H1 (cell line): ENCODE measurements at regions of chr7 and their contacts with region 1.

Region 1: DNA sequence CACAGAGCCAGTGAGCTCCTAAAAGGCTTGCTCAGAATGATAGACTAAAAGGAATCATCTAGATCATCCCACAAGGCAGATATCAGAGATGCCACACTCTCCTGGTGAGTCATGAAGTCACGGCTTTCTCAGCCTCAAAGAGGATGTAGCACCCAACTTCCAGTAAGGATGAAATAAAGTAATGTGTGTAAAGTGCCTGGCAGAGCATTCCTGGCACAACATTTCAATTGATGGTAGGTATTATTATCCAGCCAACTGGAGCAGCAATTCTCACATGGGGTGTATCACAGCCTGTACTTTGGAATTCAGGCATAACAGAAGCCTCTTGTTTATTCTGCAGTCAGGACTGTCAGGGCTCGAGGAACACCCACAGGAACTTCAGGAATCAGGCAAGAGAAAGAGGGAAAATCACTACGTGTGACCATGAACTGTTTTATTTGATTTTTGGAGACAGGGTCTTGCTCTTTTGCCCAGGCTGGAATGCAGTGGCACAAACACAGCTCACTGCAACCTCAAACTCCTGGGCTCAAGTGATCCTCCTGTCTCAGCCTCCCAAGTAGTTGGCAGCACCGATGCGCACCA is 5.3 kb upstream of the NAT16 start:
- DNase-seq: no peak
- H3K4me3 ChIP-seq: no peak overlapping the region
- H3K27ac ChIP-seq: no peak overlapping the region
- H3K4me1 ChIP-seq: peaks cover 0 to 5% (median 3%) of the 10 kb centered on the region in 4 experiments; a peak in 6 of 7 replicates
- H3K27me3 ChIP-seq: peaks cover 6 to 10% (median 8%) of the 10 kb centered on the region in 4 experiments; a peak in 6 of 7 replicates
- CTCF ChIP-seq: no peak
- EP300 ChIP-seq: no peak
- POLR2A ChIP-seq: no peak
- RAD21 ChIP-seq: no peak

Region 2: GRCh38 chr7:101058355-101058754 is 127.0 kb before region 1 on chr7:
- CTCF ChIA-PET with region 1: no interaction called
- POLR2A ChIA-PET with region 1: no interaction called
- DNase-seq: peak in 1 of 2 experiments; percentile 88
- H3K4me3 ChIP-seq: no peak overlapping the region
- H3K27ac ChIP-seq: no peak overlapping the region
- H3K4me1 ChIP-seq: no peaks in the 10 kb centered on the region
- H3K27me3 ChIP-seq: peaks cover 0 to 2% (median 0%) of the 10 kb centered on the region in 4 experiments; a peak in 1 of 7 replicates
- CTCF ChIP-seq: no peak
- EP300 ChIP-seq: no peak
- POLR2A ChIP-seq: no peak
- RAD21 ChIP-seq: 0 out of 4 replicates have a peak, but pooled peaks of 1 of the 2 experiments have one; percentile 3

Region 3: GRCh38 chr7:101165075-101165957 is 20.0 kb before region 1 on chr7 and contains the start of gene VGF:
- CTCF ChIA-PET with region 1: interaction called, 19 read pairs
- POLR2A ChIA-PET with region 1: interaction called, 4 read pairs
- DNase-seq: peak; percentile 93 to 98
- H3K4me3 ChIP-seq: peak within 1 kb of the TSS; percentile 46 to 74 (median 55)
- H3K27ac ChIP-seq: no peak within 1 kb of the TSS
- H3K4me1 ChIP-seq: peaks cover 21 to 64% (median 43%) of the 10 kb centered on the region in 4 experiments
- H3K27me3 ChIP-seq: peaks cover 17 to 67% (median 48%) of the 10 kb centered on the region in 4 experiments
- CTCF ChIP-seq: no peak
- EP300 ChIP-seq: peak in 1 of 2 experiments; percentile 79; a peak in 1 of 3 replicates
- POLR2A ChIP-seq: no peak
- RAD21 ChIP-seq: no peak
- total RNA-seq, gene VGF: 7.0 and 7.4 TPM in 2 replicates

Region 4: GRCh38 chr7:101173752-101174244 is 11.6 kb before region 1 on chr7:
- CTCF ChIA-PET with region 1: interaction called, 90 read pairs
- POLR2A ChIA-PET with region 1: interaction called, 8 read pairs
- DNase-seq: peak in 1 of 2 experiments; percentile 98
- H3K4me3 ChIP-seq: peak overlapping the region; percentile 31 to 68 (median 51); a peak in 7 of 8 replicates
- H3K27ac ChIP-seq: no peak overlapping the region
- H3K4me1 ChIP-seq: peaks cover 6 to 48% (median 34%) of the 10 kb centered on the region in 4 experiments
- H3K27me3 ChIP-seq: peaks cover 64 to 99% (median 91%) of the 10 kb centered on the region in 4 experiments
- CTCF ChIP-seq: no peak
- EP300 ChIP-seq: no peak
- POLR2A ChIP-seq: no peak
- RAD21 ChIP-seq: no peak

Region 5: GRCh38 chr7:101195884-101196283 is 10.5 kb after region 1 on chr7:
- CTCF ChIA-PET with region 1: interaction called, 41 read pairs
- POLR2A ChIA-PET with region 1: interaction called, 12 read pairs
- DNase-seq: no peak
- H3K4me3 ChIP-seq: no peak overlapping the region
- H3K27ac ChIP-seq: no peak overlapping the region
- H3K4me1 ChIP-seq: peaks cover 0 to 11% (median 7%) of the 10 kb centered on the region in 4 experiments; a peak in 6 of 7 replicates
- H3K27me3 ChIP-seq: peaks cover 0 to 2% (median 0%) of the 10 kb centered on the region in 4 experiments; a peak in 1 of 7 replicates
- CTCF ChIP-seq: no peak
- EP300 ChIP-seq: no peak
- POLR2A ChIP-seq: no peak
- RAD21 ChIP-seq: no peak

Region 6: DNA sequence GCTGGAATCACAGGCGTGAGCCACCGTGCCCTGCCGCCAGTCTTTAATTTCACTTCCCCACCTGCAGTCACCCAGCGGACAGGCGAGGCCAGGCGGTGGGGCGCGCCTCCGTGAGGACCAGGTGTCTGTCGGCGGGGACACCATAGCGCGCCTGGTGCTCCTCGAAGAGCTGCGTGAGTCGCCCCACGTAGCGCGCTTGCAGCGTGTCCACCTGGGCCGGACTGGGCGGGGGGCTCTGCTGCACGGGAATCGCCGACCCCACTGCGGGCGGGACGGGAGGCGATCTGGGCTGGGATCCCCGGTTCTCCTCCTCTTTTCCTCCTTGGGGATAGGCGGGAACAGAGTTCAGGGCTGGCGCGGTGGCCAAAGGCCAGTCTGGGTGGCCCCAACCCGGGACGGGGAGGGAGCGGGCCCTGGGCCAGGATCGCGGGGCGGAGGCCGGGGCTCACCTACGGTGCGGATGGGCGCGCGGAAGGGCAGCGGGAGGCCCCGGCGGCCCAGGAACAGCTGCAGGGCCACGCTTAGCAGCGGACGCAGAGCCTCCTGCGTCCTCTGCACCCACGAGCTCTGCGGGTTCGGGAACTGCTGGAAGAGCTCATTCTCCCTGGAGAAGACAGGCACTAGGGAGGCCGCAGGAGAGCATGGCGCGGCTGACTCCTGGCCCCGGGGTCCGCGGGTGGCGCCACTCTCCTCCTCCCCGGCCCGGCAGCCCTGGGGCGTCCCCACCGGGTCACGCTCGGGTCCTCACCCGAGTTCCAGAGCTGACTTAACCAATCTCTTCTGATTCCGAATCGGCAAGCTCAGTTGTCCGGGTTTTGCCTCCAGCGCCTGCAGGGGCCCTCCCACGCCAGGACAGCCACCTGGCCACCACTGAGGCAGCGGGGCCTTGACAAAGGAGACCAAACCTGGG is 16.6 kb after region 1 on chr7:
- CTCF ChIA-PET with region 1: interaction called, 22 read pairs
- POLR2A ChIA-PET with region 1: interaction called, 6 read pairs
- DNase-seq: peak in 1 of 2 experiments; percentile 78
- H3K4me3 ChIP-seq: peak overlapping the region; percentile 37 to 60 (median 47)
- H3K27ac ChIP-seq: no peak overlapping the region
- H3K4me1 ChIP-seq: peaks cover 5 to 21% (median 14%) of the 10 kb centered on the region in 4 experiments
- H3K27me3 ChIP-seq: peaks cover 0 to 16% (median 9%) of the 10 kb centered on the region in 4 experiments; a peak in 5 of 7 replicates
- CTCF ChIP-seq: no peak
- EP300 ChIP-seq: no peak
- POLR2A ChIP-seq: no peak; a peak in 1 of 3 replicates
- RAD21 ChIP-seq: no peak